Aorta (tissue), 5 donors: ENCODE measurements at regions of chr11 and their contacts with region 1.

Region 1: GRCh38 chr11:113664981-113665710 is 41.0 kb downstream of the TMPRSS5 start:
- DNase-seq: no peak
- ATAC-seq: no peak
- H3K4me3 ChIP-seq: no peak overlapping the region
- H3K27ac ChIP-seq: no peak overlapping the region
- H3K4me1 ChIP-seq: peaks cover 1 to 3% of the 10 kb centered on the region in 2 donors
- H3K27me3 ChIP-seq: no peaks in the 10 kb centered on the region

Region 2: DNA sequence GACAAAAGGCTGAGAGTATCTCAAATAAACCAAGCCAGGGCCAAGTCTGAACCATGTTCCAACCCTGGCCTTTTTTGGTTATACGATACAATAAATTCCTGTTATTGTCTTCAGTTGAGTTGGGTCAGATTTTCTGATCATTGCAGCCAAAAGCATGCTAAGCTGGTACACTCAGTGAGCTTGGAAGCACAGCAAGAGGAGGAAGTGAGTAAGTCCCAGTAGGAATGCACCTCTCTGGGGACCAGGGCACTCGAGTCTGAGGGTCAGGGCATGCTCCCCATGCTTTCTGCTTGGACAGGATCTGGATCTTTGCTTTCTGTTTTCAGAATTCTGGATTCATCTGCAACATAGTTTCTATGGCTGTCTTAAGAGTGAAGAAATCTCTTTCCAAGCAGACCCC is 32.2 kb before region 1 on chr11:
- intact Hi-C with region 1: loop called in 1 of 2 experiments (anchors 5 kb)
- DNase-seq: peak in 1 of 2 donors; percentile 78
- ATAC-seq: peak; percentile 83
- H3K4me3 ChIP-seq: no peak overlapping the region
- H3K27ac ChIP-seq: peak overlapping the region; percentile 99 to 100
- H3K4me1 ChIP-seq: peaks cover 0 to 4% of the 10 kb centered on the region in 2 donors
- H3K27me3 ChIP-seq: no peaks in the 10 kb centered on the region